Activated CD4-positive, alpha-beta T cell treated with anti-CD3 and anti-CD28 coated beads for 36 hours (primary cell): ENCODE measurements at regions of chr6 and their contacts with region 1.

Region 1: GRCh38 chr6:125301435-125302391 is at the start of gene HDDC2:
- DNase-seq: peak; percentile 64
- ATAC-seq: peak; percentile 79
- H3K4me3 Mint-ChIP-seq: peak within 1 kb of the TSS; percentile 94
- H3K27ac Mint-ChIP-seq: peak within 1 kb of the TSS; percentile 98
- H3K4me1 Mint-ChIP-seq: peaks cover 46% of the 10 kb centered on the region
- H3K27me3 Mint-ChIP-seq: no peaks in the 10 kb centered on the region
- total RNA-seq, gene HDDC2: 96.7 to 120 TPM

Region 2: DNA sequence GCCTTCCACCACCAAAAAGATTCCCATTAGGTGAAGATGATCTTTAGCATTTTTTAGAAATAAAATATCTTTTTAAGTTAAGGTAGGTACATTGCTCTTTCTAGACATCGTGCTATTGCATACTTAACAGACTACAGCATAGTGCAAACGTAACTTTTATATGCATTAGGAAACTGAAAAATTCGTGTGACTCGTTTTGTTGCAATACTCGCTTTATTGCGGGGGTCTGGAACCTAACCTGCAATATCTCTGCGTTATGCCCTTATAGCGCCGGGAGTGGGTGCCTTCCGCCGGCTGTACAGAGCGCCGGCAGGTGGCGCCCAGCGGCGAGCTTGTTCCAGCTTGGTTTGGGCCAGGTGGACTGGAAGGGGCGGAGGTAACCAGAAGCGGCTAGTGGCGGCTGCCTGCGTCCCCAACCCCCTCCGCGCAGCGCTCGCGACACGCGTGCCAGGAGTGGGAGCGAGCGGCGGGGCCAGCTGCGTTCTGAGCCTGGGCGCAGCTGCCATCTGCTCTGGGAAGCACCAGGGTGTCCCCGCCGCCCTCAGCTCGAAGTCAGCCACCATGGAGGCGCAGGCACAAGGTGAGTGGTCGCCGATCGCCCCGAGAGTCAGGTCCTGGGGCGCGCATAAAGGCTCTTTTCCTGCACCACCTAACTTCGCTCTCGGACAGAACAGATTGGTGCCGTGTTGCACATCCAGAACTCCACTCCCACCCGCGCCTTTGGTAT is 148.2 kb before region 1 on chr6 and contains the start of gene TPD52L1:
- CTCF ChIA-PET with region 1: no interaction called
- POLR2A ChIA-PET with region 1: no interaction called
- intact Hi-C with region 1: loop called (anchors 5 kb)
- DNase-seq: peak; percentile 81
- ATAC-seq: peak; percentile 94
- H3K4me3 Mint-ChIP-seq: peak within 1 kb of the TSS; percentile 64
- H3K27ac Mint-ChIP-seq: no peak within 1 kb of the TSS
- H3K4me1 Mint-ChIP-seq: peaks cover 5% of the 10 kb centered on the region
- H3K27me3 Mint-ChIP-seq: peaks cover 36% of the 10 kb centered on the region
- total RNA-seq, gene TPD52L1: 0.89 to 1.4 TPM

Region 3: GRCh38 chr6:125262016-125263013 is 39.4 kb before region 1 on chr6:
- CTCF ChIA-PET with region 1: no interaction called
- POLR2A ChIA-PET with region 1: no interaction called
- intact Hi-C with region 1: no loop called
- DNase-seq: no peak
- ATAC-seq: no peak
- H3K4me3 Mint-ChIP-seq: no peak overlapping the region
- H3K27ac Mint-ChIP-seq: no peak overlapping the region
- H3K4me1 Mint-ChIP-seq: no peaks in the 10 kb centered on the region
- H3K27me3 Mint-ChIP-seq: no peaks in the 10 kb centered on the region

Region 4: GRCh38 chr6:125314019-125314581 is 12.4 kb after region 1 on chr6:
- CTCF ChIA-PET with region 1: interaction called, 20 read pairs
- POLR2A ChIA-PET with region 1: no interaction called
- intact Hi-C with region 1: no loop called
- DNase-seq: peak; percentile 62
- ATAC-seq: peak; percentile 74
- H3K4me3 Mint-ChIP-seq: no peak overlapping the region
- H3K27ac Mint-ChIP-seq: no peak overlapping the region
- H3K4me1 Mint-ChIP-seq: no peaks in the 10 kb centered on the region
- H3K27me3 Mint-ChIP-seq: peaks cover 2% of the 10 kb centered on the region

Region 5: DNA sequence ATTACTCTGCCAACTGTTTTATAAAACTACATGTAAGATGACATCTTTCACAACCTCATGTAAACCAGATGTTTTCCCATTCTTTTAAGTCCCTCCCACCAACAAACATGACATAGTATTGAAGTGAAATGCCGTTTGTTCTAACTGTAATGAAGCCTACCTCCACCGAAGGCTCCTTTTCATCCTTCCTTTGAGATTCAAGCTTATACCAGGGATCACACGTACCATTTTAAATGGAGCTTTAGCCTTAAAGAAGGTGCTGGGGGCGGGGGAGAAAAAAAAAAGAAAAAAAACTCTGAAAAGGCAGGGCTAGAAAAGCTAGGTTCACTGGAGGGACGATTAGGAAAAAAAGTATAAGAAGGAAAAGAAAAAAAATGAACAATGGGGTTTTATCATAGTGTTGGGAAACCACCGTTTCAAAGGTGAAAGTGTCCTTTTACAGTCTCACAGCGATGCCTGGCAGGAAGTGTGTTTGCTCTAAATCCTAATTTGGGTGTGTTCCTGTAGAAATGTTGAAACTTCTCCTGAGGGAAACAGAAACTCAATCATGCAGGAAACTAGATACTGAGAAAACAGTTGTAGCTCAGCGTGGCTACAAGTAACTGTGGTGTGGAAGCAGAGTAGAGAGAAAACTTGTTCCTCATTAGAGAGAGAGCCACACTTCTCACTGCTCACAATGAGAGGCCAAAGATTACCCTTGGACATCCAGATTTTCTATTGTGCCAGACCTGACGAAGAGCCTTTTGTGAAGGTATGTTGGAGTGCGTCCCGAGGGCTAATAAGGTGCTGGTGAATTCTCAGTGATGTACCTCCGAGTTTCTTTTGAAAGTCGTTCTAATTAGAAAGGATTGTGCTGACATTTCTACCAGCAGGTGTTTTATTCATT is 617.2 kb after region 1 on chr6:
- CTCF ChIA-PET with region 1: no interaction called
- POLR2A ChIA-PET with region 1: no interaction called
- intact Hi-C with region 1: loop called in 1 of 2 experiments (anchors 1 kb)
- DNase-seq: peak; percentile 68
- ATAC-seq: peak; percentile 96
- H3K4me3 Mint-ChIP-seq: peak overlapping the region; percentile 84
- H3K27ac Mint-ChIP-seq: peak overlapping the region; percentile 98
- H3K4me1 Mint-ChIP-seq: peaks cover 37% of the 10 kb centered on the region
- H3K27me3 Mint-ChIP-seq: no peaks in the 10 kb centered on the region

Region 6: GRCh38 chr6:125986300-125987025 is 684.8 kb after region 1 on chr6 and contains the start of gene TRMT11:
- CTCF ChIA-PET with region 1: no interaction called
- POLR2A ChIA-PET with region 1: no interaction called
- intact Hi-C with region 1: loop called in 1 of 2 experiments (anchors 5 kb)
- DNase-seq: peak; percentile 89
- ATAC-seq: peak; percentile 96
- H3K4me3 Mint-ChIP-seq: no peak within 1 kb of the TSS
- H3K27ac Mint-ChIP-seq: peak within 1 kb of the TSS; percentile 20
- H3K4me1 Mint-ChIP-seq: peaks cover 7% of the 10 kb centered on the region
- H3K27me3 Mint-ChIP-seq: no peaks in the 10 kb centered on the region
- total RNA-seq, gene TRMT11: 33.4 to 40.5 TPM

Region 7: DNA sequence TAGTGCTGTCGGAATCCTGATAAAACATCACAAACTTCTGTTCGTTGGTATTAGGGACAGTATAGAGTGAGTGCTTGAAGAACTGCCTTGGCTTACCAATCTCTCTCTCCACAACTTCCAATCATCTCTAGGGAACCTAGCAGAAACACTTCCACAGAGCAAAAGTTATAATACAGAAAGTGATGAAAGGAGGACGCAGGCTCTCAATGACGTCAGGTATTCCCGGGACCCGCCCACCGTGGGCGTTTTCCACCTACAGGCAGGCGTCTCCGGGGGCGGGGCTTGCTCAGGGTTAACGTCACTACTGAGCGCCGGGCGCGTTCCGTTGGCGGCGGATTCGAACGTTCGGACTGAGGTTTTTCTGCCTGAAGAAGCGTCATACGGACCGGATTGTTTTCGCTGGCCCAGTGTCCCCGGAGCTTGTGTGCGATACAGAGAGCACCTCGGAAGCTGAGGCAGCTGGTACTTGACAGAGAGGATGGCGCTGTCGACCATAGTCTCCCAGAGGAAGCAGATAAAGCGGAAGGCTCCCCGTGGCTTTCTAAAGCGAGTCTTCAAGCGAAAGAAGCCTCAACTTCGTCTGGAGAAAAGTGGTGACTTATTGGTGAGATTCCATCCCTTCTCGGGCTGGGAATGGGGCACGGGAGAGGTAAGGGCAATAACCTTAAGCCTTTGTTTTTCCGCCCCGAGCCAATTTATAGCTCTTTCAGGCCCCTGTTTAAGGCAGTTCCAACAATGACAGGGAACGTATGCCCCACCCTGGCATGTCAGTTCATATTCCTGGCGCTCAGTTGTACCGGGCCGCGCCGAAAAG is 1038.3 kb after region 1 on chr6 and contains the start of gene CENPW:
- CTCF ChIA-PET with region 1: no interaction called
- POLR2A ChIA-PET with region 1: no interaction called
- intact Hi-C with region 1: loop called in 1 of 2 experiments (anchors 10 kb)
- DNase-seq: peak; percentile 97
- ATAC-seq: peak; percentile 92
- H3K4me3 Mint-ChIP-seq: no peak within 1 kb of the TSS
- H3K27ac Mint-ChIP-seq: no peak within 1 kb of the TSS
- H3K4me1 Mint-ChIP-seq: peaks cover 13% of the 10 kb centered on the region
- H3K27me3 Mint-ChIP-seq: no peaks in the 10 kb centered on the region
- total RNA-seq, gene CENPW: 44.1 to 63.6 TPM